Breast epithelium (tissue), 4 donors: ENCODE measurements at regions of chr1 and their contacts with region 1.

Region 1: DNA sequence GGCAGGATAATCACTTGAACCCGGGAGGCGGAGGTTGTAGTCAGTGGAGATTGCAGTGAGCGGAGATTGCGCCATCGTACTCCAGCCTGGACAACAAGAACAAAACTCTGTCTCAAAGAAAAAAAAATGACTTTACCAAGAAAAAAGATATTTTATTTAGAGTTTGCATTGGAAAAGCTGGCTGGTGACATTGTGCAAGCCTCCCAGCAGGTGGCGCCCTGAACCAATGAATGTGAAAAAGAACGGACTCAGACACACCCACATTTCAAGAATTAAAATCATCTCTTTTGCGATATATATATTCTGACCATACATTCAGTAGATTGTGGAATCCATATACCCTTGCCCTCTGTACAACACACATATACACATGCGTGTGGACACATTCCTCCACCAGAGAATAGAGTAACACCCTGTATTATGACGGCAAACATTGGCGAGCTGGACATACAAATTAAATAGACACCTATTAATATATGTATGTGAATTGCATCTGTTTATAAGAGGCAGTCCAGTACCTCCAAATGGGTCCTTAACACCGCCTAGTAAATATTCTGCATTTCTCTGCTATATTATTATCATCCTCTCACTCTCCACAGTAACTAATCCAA is 39.0 kb upstream of the CADM3 start:
- DNase-seq: no peak
- H3K4me3 ChIP-seq: no peak overlapping the region
- H3K27ac ChIP-seq: no peak overlapping the region
- H3K4me1 ChIP-seq: no peaks in the 10 kb centered on the region
- H3K27me3 ChIP-seq: no peaks in the 10 kb centered on the region
- CTCF ChIP-seq: peak; percentile 42 to 68 (median 56)
- POLR2A ChIP-seq: no peak

Region 2: GRCh38 chr1:158458263-158458662 is 674.1 kb before region 1 on chr1:
- intact Hi-C with region 1: loop called (anchors 5 kb)
- DNase-seq: no peak
- H3K4me3 ChIP-seq: no peak overlapping the region
- H3K27ac ChIP-seq: no peak overlapping the region
- H3K4me1 ChIP-seq: no peaks in the 10 kb centered on the region
- H3K27me3 ChIP-seq: no peaks in the 10 kb centered on the region
- CTCF ChIP-seq: no peak
- POLR2A ChIP-seq: no peak